Head of caudate nucleus (tissue), 42 donors: ENCODE measurements at regions of chr3 and their contacts with region 1.

Region 1: DNA sequence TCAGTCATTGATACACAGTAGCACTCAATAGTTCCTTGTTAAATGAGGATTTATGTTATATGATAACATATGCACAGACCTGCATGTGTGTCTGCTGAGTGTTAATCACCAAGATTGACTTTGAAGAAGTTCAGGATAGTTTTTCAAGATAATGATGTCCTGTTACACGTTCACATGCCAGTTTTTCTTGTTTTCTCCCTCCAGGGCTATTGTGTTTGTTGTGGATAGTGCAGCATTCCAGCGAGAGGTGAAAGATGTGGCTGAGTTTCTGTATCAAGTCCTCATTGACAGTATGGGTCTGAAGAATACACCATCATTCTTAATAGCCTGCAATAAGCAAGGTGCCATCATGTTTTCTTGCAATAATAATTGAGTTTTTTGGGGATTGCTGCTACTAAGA is 9.8 kb downstream of the SRPRB start:
- DNase-seq: peak in 1 of 42 donors; percentile 3

Region 2: GRCh38 chr3:133927540-133928066 is 112.2 kb after region 1 on chr3:
- intact Hi-C with region 1: loop called (anchors 5 kb)
- DNase-seq: peak in 38 of 42 donors; percentile 26 to 88 (median 70)